BJ (cell line): ENCODE measurements at regions of chr1 and their contacts with region 1.

Region 1: DNA sequence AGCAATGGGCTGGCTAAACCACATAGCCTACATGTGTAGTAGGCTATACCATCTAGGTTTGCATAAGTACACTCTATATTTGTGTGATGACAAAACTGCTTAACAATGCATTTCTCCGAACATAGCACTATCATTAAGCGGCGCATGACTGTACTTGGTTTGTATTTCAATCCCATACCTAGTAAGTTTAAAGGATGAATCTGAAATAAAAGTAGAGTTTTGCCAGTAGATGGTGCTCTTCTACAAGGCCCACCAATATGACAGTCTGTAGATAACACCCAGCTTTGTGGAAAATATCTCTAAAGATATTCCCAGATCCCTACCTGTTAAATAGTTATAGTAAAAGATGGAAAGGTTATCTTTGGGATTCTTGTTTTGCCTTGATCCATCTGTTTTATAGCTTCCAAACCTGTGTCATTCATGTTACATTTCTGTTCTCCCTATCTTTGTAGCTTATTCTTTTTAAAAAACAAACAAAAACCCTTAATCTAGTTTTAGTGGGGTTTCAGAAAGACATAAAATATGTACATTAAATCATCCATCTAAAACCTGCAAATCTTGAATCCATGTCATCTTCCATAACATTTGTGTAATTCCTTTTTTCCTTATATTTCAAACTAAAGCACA is 33.9 kb upstream of the ASPM start:
- DNase-seq: no peak
- H3K4me3 ChIP-seq: no peak overlapping the region
- H3K27me3 ChIP-seq: no peaks in the 10 kb centered on the region
- CTCF ChIP-seq: peak; percentile 74

Region 2: GRCh38 chr1:197356723-197357533 is 176.6 kb after region 1 on chr1:
- CTCF ChIA-PET with region 1: interaction called, 15 read pairs
- POLR2A ChIA-PET with region 1: no interaction called
- DNase-seq: no peak
- H3K4me3 ChIP-seq: no peak overlapping the region
- H3K27me3 ChIP-seq: no peaks in the 10 kb centered on the region
- CTCF ChIP-seq: peak; percentile 72